ENCODE measurements at regions of chr7 and their contacts with region 1.

Region 1: GRCh38 chr7:109964780-109965179 is 1126.1 kb upstream of the LRRN3 start:
- DNase-seq: no peak
- ATAC-seq: no peak
- H3K4me3 Mint-ChIP-seq: no peak overlapping the region
- H3K27ac Mint-ChIP-seq: no peak overlapping the region
- H3K4me1 Mint-ChIP-seq: no peaks in the 10 kb centered on the region
- H3K27me3 Mint-ChIP-seq: no peaks in the 10 kb centered on the region
- CTCF ChIP-seq: no peak

Region 2: DNA sequence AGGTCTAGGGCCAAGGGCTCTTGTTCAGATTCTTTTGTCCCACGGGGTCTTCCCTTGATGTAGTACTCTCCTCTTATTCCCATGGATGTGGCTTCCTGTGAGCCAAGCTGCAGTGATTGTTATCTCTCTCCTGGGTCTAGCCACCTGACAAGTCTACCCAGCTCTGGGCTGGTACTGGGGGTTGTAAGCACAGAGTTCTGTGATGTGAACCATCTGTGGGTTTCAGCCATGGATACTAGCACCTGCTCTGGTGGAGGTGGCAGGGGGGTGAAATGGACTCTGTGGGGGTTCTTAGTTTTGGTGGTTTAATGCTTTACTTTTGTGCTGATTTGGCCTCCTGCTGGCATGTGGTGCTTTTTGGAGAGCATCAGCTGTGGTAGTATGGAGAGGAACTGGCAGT is 1044.3 kb before region 1 on chr7:
- CTCF ChIA-PET with region 1: no interaction called
- POLR2A ChIA-PET with region 1: no interaction called
- intact Hi-C with region 1: no loop called
- DNase-seq: no peak
- ATAC-seq: no peak
- H3K4me3 Mint-ChIP-seq: no peak overlapping the region
- H3K27ac Mint-ChIP-seq: no peak overlapping the region
- H3K4me1 Mint-ChIP-seq: no peaks in the 10 kb centered on the region
- H3K27me3 Mint-ChIP-seq: no peaks in the 10 kb centered on the region
- CTCF ChIP-seq: no peak

Region 3: DNA sequence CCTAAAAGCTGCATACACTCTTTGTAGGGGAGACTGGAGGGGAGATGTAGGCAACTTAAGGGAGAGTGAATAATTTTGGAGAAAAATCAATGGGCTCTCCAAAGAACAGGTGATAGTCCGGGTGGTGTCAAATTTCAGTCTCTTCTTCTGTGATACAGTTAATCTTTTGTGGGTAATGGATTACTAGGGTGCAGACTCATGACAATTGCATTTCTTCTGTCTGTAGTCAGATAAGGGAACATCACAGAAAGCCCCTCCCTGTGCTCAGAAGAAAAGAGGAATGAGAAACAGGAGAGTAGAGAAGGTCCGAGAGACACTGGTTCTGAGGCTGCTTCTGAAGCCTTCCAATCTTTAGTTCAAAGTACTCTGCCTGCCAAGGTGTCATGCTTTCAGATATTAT is 14.5 kb before region 1 on chr7:
- CTCF ChIA-PET with region 1: no interaction called
- POLR2A ChIA-PET with region 1: interaction called, 10 read pairs
- intact Hi-C with region 1: no loop called
- DNase-seq: no peak
- ATAC-seq: no peak
- H3K4me3 Mint-ChIP-seq: no peak overlapping the region
- H3K27ac Mint-ChIP-seq: no peak overlapping the region
- H3K4me1 Mint-ChIP-seq: no peaks in the 10 kb centered on the region
- H3K27me3 Mint-ChIP-seq: no peaks in the 10 kb centered on the region
- CTCF ChIP-seq: no peak

Region 4: GRCh38 chr7:110382736-110383135 is 418.0 kb after region 1 on chr7:
- CTCF ChIA-PET with region 1: no interaction called
- POLR2A ChIA-PET with region 1: no interaction called
- intact Hi-C with region 1: no loop called
- DNase-seq: no peak
- ATAC-seq: no peak
- H3K4me3 Mint-ChIP-seq: no peak overlapping the region
- H3K27ac Mint-ChIP-seq: no peak overlapping the region
- H3K4me1 Mint-ChIP-seq: no peaks in the 10 kb centered on the region
- H3K27me3 Mint-ChIP-seq: no peaks in the 10 kb centered on the region
- CTCF ChIP-seq: no peak

Measured in activated B cell treated with CpG ODN at 0.5 μM for 24 hours (primary cell).